Colonic mucosa (tissue), 4 donors: ENCODE measurements at regions of chr9 and their contacts with region 1.

Region 1: GRCh38 chr9:27033823-27034403 is 28.4 kb upstream of the LRRC19 start:
- DNase-seq: peak; percentile 82
- H3K4me3 ChIP-seq: no peak overlapping the region
- H3K27ac ChIP-seq: no peak overlapping the region
- H3K4me1 ChIP-seq: no peaks in the 10 kb centered on the region
- H3K27me3 ChIP-seq: no peaks in the 10 kb centered on the region
- CTCF ChIP-seq: peak; percentile 86

Region 2: DNA sequence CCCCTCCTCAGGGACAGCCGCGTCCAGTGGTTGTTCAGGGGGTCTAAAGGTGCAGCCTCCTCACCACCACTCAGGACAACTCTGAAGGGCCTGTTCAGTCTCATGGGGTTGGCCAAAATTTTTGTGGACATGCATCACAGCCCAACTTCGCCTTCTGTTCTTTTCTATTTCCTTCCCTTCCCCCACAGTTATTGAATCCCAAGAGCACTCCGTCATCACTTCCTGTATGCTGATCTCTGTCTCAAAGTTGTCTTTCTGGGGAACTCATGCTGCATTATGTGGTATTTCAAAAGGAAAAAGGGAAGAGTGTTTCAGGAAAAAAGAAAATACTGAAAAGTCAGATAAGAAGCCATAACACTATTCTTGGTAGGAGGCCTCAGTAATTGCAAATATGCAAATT is 496.7 kb before region 1 on chr9:
- intact Hi-C with region 1: no loop called
- DNase-seq: no peak
- H3K4me3 ChIP-seq: no peak overlapping the region
- H3K27ac ChIP-seq: no peak overlapping the region
- H3K4me1 ChIP-seq: no peaks in the 10 kb centered on the region
- H3K27me3 ChIP-seq: no peaks in the 10 kb centered on the region
- CTCF ChIP-seq: no peak

Region 3: GRCh38 chr9:27194401-27195091 is 160.6 kb after region 1 on chr9:
- intact Hi-C with region 1: loop called (anchors 10 kb)
- DNase-seq: no peak
- H3K4me3 ChIP-seq: no peak overlapping the region
- H3K27ac ChIP-seq: no peak overlapping the region
- H3K4me1 ChIP-seq: no peaks in the 10 kb centered on the region
- H3K27me3 ChIP-seq: no peaks in the 10 kb centered on the region
- CTCF ChIP-seq: no peak

Region 4: DNA sequence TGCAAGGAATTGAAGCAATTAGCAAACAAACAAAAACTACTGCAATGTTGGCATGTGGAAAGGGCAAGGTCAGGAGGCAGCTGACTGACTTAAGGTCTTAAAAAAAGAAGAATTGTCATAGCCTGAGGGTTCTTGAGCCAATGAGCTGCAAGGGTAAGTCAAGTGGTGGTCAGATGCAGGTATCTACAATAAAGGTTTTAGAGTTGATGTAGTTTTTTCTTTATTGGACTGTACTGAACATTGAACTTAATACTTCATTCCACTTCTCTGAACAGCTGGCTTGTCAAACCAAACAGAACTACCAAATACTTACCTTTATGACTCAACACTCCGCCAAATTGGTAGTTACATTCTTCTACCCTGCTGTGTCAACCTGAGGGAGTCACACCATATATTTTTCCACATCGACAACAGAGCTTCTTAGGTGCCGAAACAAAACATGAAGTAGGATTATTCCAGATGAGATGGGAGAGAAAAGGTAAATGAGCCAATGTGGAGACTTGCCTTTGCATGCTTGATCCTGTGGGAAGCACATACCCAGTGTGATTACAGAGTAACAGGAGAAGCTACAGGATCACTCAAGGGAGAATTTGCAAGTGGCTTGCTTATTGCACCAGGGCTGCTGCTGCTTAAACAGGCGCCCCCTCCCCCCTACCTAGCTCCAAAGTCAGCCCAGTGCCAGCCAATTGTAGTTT is 227.8 kb after region 1 on chr9:
- intact Hi-C with region 1: loop called (anchors 5 kb)
- DNase-seq: no peak
- H3K4me3 ChIP-seq: no peak overlapping the region
- H3K27ac ChIP-seq: no peak overlapping the region
- H3K4me1 ChIP-seq: no peaks in the 10 kb centered on the region
- H3K27me3 ChIP-seq: no peaks in the 10 kb centered on the region
- CTCF ChIP-seq: no peak

Region 5: GRCh38 chr9:27276193-27277030 is 242.5 kb after region 1 on chr9:
- intact Hi-C with region 1: loop called (anchors 5 kb)
- DNase-seq: peak; percentile 26
- H3K4me3 ChIP-seq: no peak overlapping the region
- H3K27ac ChIP-seq: no peak overlapping the region
- H3K4me1 ChIP-seq: no peaks in the 10 kb centered on the region
- H3K27me3 ChIP-seq: no peaks in the 10 kb centered on the region
- CTCF ChIP-seq: peak; percentile 77

Region 6: DNA sequence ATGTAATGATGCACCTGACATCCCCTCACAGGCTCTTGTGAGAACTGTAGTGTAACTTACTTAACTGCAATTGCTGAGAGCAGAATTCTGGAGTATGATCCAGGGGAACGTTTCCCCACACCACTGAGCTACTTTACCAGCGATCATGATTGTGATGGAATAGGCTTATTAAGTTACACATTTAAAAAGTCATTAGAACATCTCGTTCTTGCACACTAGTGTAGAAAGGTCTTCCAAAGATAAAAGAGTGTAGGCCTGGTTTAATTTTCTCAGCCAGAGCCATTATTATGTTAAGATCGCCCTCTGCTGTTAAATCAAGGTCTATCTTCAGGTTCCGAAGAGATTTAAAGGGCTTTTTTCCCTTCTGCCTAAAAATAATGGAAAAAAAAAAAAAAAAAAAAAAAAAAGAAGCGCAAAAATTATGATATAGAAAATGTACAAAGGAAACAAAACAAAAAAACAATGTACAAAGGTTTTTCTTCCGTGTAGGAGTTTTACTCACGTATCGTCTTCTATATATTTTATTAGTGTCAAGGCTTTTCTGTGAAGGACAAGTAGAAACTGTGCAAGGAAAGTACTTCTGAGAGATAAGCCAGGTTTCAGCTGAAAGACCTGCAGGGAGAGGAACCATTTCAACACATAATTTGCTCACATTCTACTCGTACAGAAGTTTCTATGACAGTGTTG is 514.3 kb after region 1 on chr9:
- intact Hi-C with region 1: loop called (anchors 10 kb)
- DNase-seq: no peak
- H3K4me3 ChIP-seq: no peak overlapping the region
- H3K27ac ChIP-seq: no peak overlapping the region
- H3K4me1 ChIP-seq: no peaks in the 10 kb centered on the region
- H3K27me3 ChIP-seq: no peaks in the 10 kb centered on the region
- CTCF ChIP-seq: peak; percentile 38